ENCODE measurements at regions of chr3 and their contacts with region 1.

Region 1: DNA sequence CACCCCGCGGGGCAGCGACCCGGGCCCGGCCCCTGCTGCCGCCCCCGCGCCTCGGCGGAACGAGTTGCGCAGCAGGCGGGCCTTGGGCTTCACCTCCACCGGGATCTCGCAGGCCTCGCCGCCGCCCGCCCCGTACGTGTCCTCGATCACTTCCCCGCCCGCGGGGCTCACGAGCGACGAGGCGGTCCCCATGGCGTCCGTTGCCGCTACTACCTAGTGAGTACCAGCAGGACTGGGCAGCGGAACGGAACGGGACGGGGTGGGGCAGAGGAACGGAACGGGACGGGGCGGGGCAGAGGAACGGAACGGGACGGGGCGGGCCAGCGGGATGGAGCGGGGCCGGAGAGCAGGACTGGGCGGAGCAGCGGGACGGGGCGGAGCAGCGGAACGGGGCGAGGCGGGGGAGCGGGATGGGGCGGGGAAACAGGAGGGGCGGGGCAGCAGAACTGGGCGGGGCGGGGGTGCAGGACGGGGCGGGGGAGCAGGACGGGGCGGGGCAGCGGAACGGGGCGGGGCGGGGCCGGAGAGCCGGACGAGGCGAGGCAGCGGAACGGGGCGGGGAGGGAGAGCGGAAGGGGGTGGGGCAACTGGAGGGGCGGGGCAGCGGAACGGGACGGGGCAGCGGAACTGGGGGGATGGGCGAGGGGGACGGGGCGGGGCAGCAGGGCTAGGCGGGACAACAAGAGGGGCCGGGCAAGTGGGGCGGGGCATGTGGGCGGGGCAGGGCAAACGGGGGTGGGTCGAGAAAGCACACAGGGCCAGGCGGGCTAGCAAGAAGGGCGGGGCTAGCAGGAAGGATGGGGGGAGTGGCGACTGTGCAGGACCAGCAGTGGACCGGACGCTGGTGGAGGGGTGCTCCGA is at the start of gene NPHP3:
- DNase-seq: peak; percentile 93
- H3K4me3 ChIP-seq: peak within 1 kb of the TSS; percentile 86 to 98 (median 93)
- H3K27ac ChIP-seq: peak within 1 kb of the TSS; percentile 63
- H3K4me1 ChIP-seq: peaks cover 26% of the 10 kb centered on the region
- H3K27me3 ChIP-seq: no peaks in the 10 kb centered on the region
- CTCF ChIP-seq: no peak
- POLR2A ChIP-seq: peak; percentile 92
- total RNA-seq, gene NPHP3: 30.0 and 30.3 TPM in 2 replicates

Region 2: GRCh38 chr3:132659365-132660051 is 62.9 kb before region 1 on chr3 and contains the start of gene ACAD11:
- CTCF ChIA-PET with region 1: interaction called, 3 read pairs
- POLR2A ChIA-PET with region 1: no interaction called
- dilution Hi-C with region 1: no loop called
- intact Hi-C with region 1: loop called (anchors 1 kb)
- DNase-seq: peak; percentile 85
- H3K4me3 ChIP-seq: peak within 1 kb of the TSS; percentile 43 to 71 (median 70)
- H3K27ac ChIP-seq: peak within 1 kb of the TSS; percentile 68
- H3K4me1 ChIP-seq: peaks cover 28% of the 10 kb centered on the region
- H3K27me3 ChIP-seq: no peaks in the 10 kb centered on the region
- CTCF ChIP-seq: peak; percentile 66 to 70
- POLR2A ChIP-seq: no peak
- total RNA-seq, gene ACAD11: 9.6 and 15.2 TPM in 2 replicates

Region 3: DNA sequence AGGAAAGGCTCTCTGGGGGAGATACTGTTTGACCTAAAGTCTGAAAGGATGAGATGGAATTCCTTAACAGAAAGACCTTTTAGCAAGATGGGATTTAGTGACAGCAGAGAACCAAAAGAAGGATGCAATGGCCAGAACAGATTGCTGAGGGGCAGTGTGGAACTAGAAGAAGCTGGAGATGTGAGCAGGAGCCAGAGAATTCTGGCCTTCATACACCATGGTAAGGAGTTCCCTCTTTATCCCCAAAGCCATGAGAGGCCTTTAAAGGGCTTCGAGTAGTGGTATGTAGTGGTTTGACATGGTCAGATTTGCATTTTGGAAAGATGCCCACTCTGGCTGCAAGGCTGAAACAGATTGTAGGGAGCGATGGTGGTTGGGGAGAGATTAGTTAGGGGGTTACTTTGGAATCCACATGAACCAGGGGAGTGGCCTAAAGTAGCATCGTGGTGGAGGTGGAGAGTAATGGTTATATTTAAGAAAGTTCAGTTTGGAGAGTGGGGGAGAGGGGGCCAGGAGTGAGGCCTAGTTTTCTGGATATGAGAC is 33.8 kb after region 1 on chr3:
- CTCF ChIA-PET with region 1: no interaction called
- POLR2A ChIA-PET with region 1: no interaction called
- dilution Hi-C with region 1: no loop called
- intact Hi-C with region 1: no loop called
- DNase-seq: no peak
- H3K4me3 ChIP-seq: no peak overlapping the region
- H3K27ac ChIP-seq: no peak overlapping the region
- H3K4me1 ChIP-seq: no peaks in the 10 kb centered on the region
- H3K27me3 ChIP-seq: no peaks in the 10 kb centered on the region
- CTCF ChIP-seq: no peak
- POLR2A ChIP-seq: no peak

Region 4: GRCh38 chr3:133301194-133301593 is 578.8 kb after region 1 on chr3:
- CTCF ChIA-PET with region 1: no interaction called
- POLR2A ChIA-PET with region 1: no interaction called
- dilution Hi-C with region 1: no loop called
- intact Hi-C with region 1: loop called (anchors 1 kb)
- DNase-seq: peak; percentile 76
- H3K4me3 ChIP-seq: peak overlapping the region in 2 of 3 experiments; percentile 3 to 30
- H3K27ac ChIP-seq: peak overlapping the region; percentile 14
- H3K4me1 ChIP-seq: peaks cover 38% of the 10 kb centered on the region
- H3K27me3 ChIP-seq: no peaks in the 10 kb centered on the region
- CTCF ChIP-seq: no peak
- POLR2A ChIP-seq: no peak

Region 5: DNA sequence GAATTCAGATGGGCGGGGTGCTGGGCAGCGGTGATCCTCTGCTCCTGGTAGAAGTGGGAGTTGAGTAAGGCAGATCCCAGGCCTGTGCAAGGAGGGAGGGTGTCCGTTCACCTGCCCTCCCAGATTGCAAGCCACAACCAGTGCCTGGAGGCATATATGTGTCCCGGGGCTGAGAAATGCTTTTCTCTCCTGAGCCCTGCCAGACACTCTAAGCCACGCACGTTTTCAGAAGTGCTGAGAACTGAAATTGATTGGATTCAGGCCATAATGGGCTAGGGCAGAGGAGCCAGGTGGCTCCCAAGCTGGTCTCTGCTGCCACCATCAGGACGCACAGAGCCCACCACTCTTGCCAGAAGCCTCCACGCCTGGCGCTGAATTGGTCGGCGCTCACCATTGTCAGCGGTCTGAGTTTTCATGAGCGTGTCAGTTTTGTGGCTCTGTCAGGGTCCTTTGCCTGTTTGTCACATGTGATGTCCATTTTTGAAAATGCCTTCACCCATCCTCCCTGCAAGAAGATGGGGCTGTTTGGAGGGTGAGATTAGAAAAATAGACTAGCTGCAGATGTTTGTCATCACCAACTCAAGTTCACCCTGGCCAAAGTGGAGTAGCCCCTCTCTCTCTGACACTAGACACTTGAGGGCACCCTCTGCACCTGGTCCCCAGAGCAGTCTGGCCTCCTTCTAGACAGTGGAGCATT is 662.1 kb after region 1 on chr3:
- CTCF ChIA-PET with region 1: interaction called, 35 read pairs
- POLR2A ChIA-PET with region 1: no interaction called
- dilution Hi-C with region 1: no loop called
- intact Hi-C with region 1: loop called (anchors 1 kb)
- DNase-seq: peak; percentile 71
- H3K4me3 ChIP-seq: no peak overlapping the region
- H3K27ac ChIP-seq: no peak overlapping the region
- H3K4me1 ChIP-seq: peaks cover 8% of the 10 kb centered on the region
- H3K27me3 ChIP-seq: peaks cover 0 to 2% of the 10 kb centered on the region in 2 experiments
- CTCF ChIP-seq: peak; percentile 93 to 96
- POLR2A ChIP-seq: no peak

Region 6: GRCh38 chr3:133661454-133662277 is 939.3 kb after region 1 on chr3 and contains the start of gene TOPBP1:
- CTCF ChIA-PET with region 1: interaction called, 4 read pairs
- POLR2A ChIA-PET with region 1: no interaction called
- dilution Hi-C with region 1: no loop called
- intact Hi-C with region 1: loop called (anchors 5 kb)
- DNase-seq: peak; percentile 69
- H3K4me3 ChIP-seq: peak within 1 kb of the TSS; percentile 60 to 86 (median 62)
- H3K27ac ChIP-seq: peak within 1 kb of the TSS; percentile 90
- H3K4me1 ChIP-seq: peaks cover 22% of the 10 kb centered on the region
- H3K27me3 ChIP-seq: no peaks in the 10 kb centered on the region
- CTCF ChIP-seq: no peak
- POLR2A ChIP-seq: peak; percentile 73
- total RNA-seq, gene TOPBP1: 42.2 and 42.4 TPM in 2 replicates

Measured in endothelial cell of umbilical vein (primary cell).